ENCODE measurements at regions of chr3 and their contacts with region 1.

Region 1: DNA sequence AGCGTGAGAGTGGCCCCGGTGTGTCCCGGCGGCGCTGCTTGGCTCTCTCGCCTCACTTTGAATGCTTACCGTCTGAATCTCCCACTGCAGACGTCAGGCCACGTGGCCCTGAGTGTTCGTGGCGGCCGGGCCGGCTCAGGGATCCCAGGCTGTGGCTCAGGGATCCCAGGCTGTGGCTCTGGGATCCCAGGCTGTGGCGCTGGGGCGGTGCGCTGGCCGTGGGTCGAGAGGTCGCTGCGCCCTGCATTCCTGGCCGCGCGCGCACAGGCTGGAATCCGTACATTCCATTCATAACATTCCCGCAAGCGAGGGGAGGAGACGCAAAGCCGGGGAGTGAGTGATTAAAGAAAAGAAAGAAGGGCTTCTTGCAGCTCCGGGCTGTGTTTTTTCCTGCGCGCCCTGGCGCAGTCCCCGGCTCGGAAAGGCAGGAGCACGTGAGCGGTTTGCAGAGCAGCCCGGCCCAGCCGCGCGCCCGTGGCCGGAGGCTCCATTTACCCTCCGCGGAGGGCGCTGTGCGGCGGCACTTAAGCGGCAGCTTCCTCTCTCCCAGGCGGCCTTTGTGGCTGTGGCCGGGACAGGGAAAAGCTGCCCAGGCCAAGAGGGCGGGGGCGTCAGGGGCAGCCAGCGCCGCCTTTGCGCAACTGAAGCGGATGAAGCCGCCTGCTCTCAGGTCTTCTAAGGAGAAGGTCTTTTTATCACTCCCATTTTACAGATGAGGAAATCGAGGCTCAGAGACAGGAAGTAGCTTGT is 87.0 kb upstream of the ALDH1L1 start:
- DNase-seq: peak; percentile 49 to 81
- H3K4me3 ChIP-seq: peak overlapping the region; percentile 11 to 66 (median 54)
- H3K27ac ChIP-seq: peak overlapping the region; percentile 11; the same call in 1 of the 2 replicates
- H3K4me1 ChIP-seq: peaks cover 0 to 24% (median 15%) of the 10 kb centered on the region in 4 experiments; a peak in 6 of 7 replicates
- H3K27me3 ChIP-seq: peaks cover 0 to 9% (median 6%) of the 10 kb centered on the region in 4 experiments; a peak in 3 of 7 replicates
- CTCF ChIP-seq: no peak
- EP300 ChIP-seq: no peak
- POLR2A ChIP-seq: no peak
- RAD21 ChIP-seq: peak in 1 of 2 experiments; percentile 25; a peak in 2 of 4 replicates

Region 2: GRCh38 chr3:125967138-125967537 is 300.3 kb before region 1 on chr3:
- CTCF ChIA-PET with region 1: no interaction called
- POLR2A ChIA-PET with region 1: no interaction called
- DNase-seq: no peak
- H3K4me3 ChIP-seq: no peak overlapping the region
- H3K27ac ChIP-seq: no peak overlapping the region
- H3K4me1 ChIP-seq: no peaks in the 10 kb centered on the region
- H3K27me3 ChIP-seq: peaks cover 0 to 10% (median 7%) of the 10 kb centered on the region in 4 experiments; a peak in 5 of 7 replicates
- CTCF ChIP-seq: no peak
- EP300 ChIP-seq: no peak
- POLR2A ChIP-seq: no peak
- RAD21 ChIP-seq: no peak

Region 3: DNA sequence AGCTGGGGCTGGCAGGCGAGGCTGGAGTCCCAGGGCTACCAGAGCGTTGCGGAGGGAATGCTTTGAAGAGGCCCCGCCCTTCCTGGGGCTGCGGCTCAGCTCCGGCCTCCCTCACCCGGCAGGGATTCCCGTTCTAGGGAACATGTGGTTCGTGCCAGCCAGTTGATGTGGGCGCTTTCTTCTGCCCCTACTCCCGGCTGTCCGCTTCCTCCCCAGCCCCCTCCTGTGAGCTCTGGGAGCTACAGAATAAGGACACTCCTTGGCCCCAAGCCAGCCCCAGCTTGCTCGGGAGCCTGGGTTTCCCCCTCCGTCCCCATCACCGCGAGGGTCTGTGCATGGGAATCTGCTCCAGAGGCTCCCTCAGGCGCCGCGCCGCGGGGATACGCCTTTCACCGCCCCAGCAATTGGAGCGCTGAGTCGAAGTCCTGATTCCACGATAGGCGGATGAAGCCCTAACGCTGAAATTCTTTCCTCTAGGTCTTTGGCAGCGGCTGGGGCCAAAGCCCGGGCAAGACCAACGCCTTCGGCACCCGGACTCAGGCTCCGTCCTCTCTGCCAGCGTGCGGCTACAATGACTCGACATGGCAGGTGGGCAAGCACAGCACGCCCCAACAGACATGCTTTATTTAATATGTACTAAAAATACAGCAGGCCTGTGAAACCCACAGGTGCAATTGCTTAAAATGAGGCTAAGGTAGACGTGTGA is 20.3 kb after region 1 on chr3:
- CTCF ChIA-PET with region 1: interaction called, 4 read pairs
- POLR2A ChIA-PET with region 1: interaction called, 19 read pairs
- DNase-seq: peak; percentile 34 to 81
- H3K4me3 ChIP-seq: peak overlapping the region; percentile 46 to 61 (median 54)
- H3K27ac ChIP-seq: no peak overlapping the region
- H3K4me1 ChIP-seq: peaks cover 2 to 18% (median 10%) of the 10 kb centered on the region in 4 experiments; a peak in 6 of 7 replicates
- H3K27me3 ChIP-seq: peaks cover 0 to 24% (median 8%) of the 10 kb centered on the region in 4 experiments; a peak in 6 of 7 replicates
- CTCF ChIP-seq: no peak
- EP300 ChIP-seq: 0 out of 3 replicates have a peak, but pooled peaks of 1 of the 2 experiments have one; percentile 1
- POLR2A ChIP-seq: no peak
- RAD21 ChIP-seq: no peak

Region 4: GRCh38 chr3:126365351-126366277 is 98.2 kb after region 1 on chr3:
- CTCF ChIA-PET with region 1: interaction called, 11 read pairs
- POLR2A ChIA-PET with region 1: interaction called, 3 read pairs
- DNase-seq: no peak
- H3K4me3 ChIP-seq: no peak overlapping the region
- H3K27ac ChIP-seq: no peak overlapping the region
- H3K4me1 ChIP-seq: peaks cover 0 to 17% (median 8%) of the 10 kb centered on the region in 4 experiments
- H3K27me3 ChIP-seq: no peaks in the 10 kb centered on the region
- CTCF ChIP-seq: peak in 2 of 3 experiments; percentile 32 to 60; a peak in 3 of 4 replicates
- EP300 ChIP-seq: no peak
- POLR2A ChIP-seq: no peak
- RAD21 ChIP-seq: peak; percentile 63 to 72